Activated B cell treated with CpG ODN at 0.5 μM for 24 hours (primary cell): ENCODE measurements at regions of chr13 and their contacts with region 1.

Region 1: GRCh38 chr13:50094615-50095293 is 79.5 kb downstream of the KCNRG start:
- DNase-seq: no peak
- ATAC-seq: no peak
- H3K4me3 Mint-ChIP-seq: no peak overlapping the region
- H3K27ac Mint-ChIP-seq: no peak overlapping the region
- H3K4me1 Mint-ChIP-seq: peaks cover 32% of the 10 kb centered on the region
- H3K27me3 Mint-ChIP-seq: no peaks in the 10 kb centered on the region
- CTCF ChIP-seq: no peak

Region 2: GRCh38 chr13:50026788-50027473 is 67.8 kb before region 1 on chr13:
- CTCF ChIA-PET with region 1: no interaction called
- POLR2A ChIA-PET with region 1: no interaction called
- intact Hi-C with region 1: no loop called
- DNase-seq: no peak
- ATAC-seq: peak; percentile 98
- H3K4me3 Mint-ChIP-seq: no peak overlapping the region
- H3K27ac Mint-ChIP-seq: peak overlapping the region; percentile 69
- H3K4me1 Mint-ChIP-seq: peaks cover 24% of the 10 kb centered on the region
- H3K27me3 Mint-ChIP-seq: no peaks in the 10 kb centered on the region
- CTCF ChIP-seq: no peak

Region 3: GRCh38 chr13:50106559-50106958 is 11.8 kb after region 1 on chr13:
- CTCF ChIA-PET with region 1: interaction called, 6 read pairs
- POLR2A ChIA-PET with region 1: interaction called, 5 read pairs
- intact Hi-C with region 1: loop called (anchors 2 kb)
- DNase-seq: no peak
- ATAC-seq: peak; percentile 85
- H3K4me3 Mint-ChIP-seq: peak overlapping the region; percentile 67
- H3K27ac Mint-ChIP-seq: peak overlapping the region; percentile 94
- H3K4me1 Mint-ChIP-seq: peaks cover 75% of the 10 kb centered on the region
- H3K27me3 Mint-ChIP-seq: no peaks in the 10 kb centered on the region
- CTCF ChIP-seq: no peak